CD8-positive, alpha-beta memory T cell (primary cell): ENCODE measurements at regions of chr6 and their contacts with region 1.

Region 1: DNA sequence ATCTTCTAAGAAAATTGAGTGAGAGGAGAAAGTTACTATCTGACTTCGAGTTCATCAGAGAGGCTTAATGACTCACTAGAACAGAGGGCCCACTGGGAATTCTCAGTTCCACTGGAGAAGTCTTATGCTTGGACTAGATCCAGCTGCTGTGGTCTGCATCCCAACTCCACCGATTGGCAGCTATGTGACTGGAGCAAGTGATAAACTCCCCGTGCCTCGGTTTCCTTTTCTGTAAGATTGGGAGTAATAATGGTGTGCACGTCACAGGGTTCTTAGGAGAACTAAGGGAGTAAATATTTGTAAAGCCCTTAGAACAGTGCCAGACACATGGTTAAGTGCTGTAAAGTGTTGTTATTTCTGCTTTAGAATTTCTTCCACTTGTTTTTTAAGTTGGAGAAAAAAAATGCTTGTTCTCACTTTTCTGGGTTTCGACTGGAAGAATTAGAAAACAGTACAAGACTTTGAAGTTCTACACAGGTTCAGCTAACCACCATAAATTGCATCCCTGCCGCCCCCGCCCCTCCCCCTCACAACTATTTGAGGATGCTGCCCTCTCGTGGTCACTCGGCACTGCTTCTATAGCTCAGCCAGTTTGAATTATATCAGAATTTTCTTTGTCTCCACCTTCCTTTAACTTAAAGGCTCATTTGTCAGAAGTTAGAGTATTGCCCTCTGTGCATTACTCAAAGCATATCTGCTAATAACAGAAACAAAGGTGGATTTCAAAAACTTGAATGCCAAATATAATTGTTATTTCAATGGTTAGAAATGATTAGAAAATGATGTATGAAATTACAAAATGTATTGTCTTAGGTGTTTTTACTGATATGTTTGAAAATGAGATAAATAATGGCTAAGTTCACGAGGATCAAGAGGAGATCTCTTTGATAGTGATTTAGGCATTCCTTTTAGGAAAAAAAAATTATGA is 95.0 kb upstream of the IFNGR1 start:
- DNase-seq: peak; percentile 40 to 77 (median 59)
- H3K4me3 ChIP-seq: no peak overlapping the region
- H3K4me3 Mint-ChIP-seq: no peak overlapping the region
- H3K27ac ChIP-seq: no peak overlapping the region
- H3K27ac Mint-ChIP-seq: peak overlapping the region in 2 of 8 donors; percentile 8 to 29
- H3K4me1 ChIP-seq: no peaks in the 10 kb centered on the region
- H3K4me1 Mint-ChIP-seq: peaks cover 2 to 14% (median 9%) of the 10 kb centered on the region in 3 donors
- H3K27me3 ChIP-seq: no peaks in the 10 kb centered on the region
- H3K27me3 Mint-ChIP-seq: peaks cover 0 to 4% of the 10 kb centered on the region in 2 donors

Region 2: GRCh38 chr6:137094411-137095008 is 219.7 kb before region 1 on chr6:
- CTCF ChIA-PET with region 1: interaction called, 31 read pairs
- POLR2A ChIA-PET with region 1: interaction called, 3 read pairs
- DNase-seq: peak; percentile 34 to 65 (median 44)
- H3K4me3 ChIP-seq: no peak overlapping the region
- H3K4me3 Mint-ChIP-seq: peak overlapping the region in 6 of 7 donors; percentile 8 to 55 (median 44)
- H3K27ac ChIP-seq: no peak overlapping the region
- H3K27ac Mint-ChIP-seq: peak overlapping the region in 6 of 8 donors; percentile 26 to 79 (median 63)
- H3K4me1 ChIP-seq: peaks cover 4% of the 10 kb centered on the region
- H3K4me1 Mint-ChIP-seq: peaks cover 19 to 24% (median 21%) of the 10 kb centered on the region in 3 donors
- H3K27me3 ChIP-seq: no peaks in the 10 kb centered on the region
- H3K27me3 Mint-ChIP-seq: peaks cover 2 to 16% of the 10 kb centered on the region in 2 donors

Region 3: DNA sequence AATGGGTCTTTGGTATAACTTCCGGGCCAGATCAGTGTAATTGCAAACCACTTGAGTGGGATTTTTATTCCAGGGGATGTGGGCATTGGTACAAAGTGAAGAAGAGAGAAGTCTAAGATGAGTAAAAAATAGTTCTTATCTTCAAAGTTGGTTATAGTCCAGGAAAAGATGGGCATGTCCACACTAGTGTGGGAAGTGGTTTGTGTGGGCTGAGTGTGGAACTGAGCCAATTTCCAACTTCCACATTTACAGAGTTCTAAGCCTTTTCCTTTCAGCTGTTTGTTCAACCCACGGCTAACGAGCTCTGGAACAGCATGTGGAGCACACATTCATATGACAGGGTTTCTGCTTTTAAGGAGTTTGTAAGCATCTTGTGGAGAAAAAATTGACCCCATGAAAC is 22.8 kb before region 1 on chr6:
- CTCF ChIA-PET with region 1: interaction called, 13 read pairs
- POLR2A ChIA-PET with region 1: no interaction called
- DNase-seq: no peak
- H3K4me3 ChIP-seq: no peak overlapping the region
- H3K4me3 Mint-ChIP-seq: no peak overlapping the region
- H3K27ac ChIP-seq: no peak overlapping the region
- H3K27ac Mint-ChIP-seq: no peak overlapping the region
- H3K4me1 ChIP-seq: no peaks in the 10 kb centered on the region
- H3K4me1 Mint-ChIP-seq: peaks cover 7 to 10% (median 8%) of the 10 kb centered on the region in 3 donors
- H3K27me3 ChIP-seq: peaks cover 3% of the 10 kb centered on the region
- H3K27me3 Mint-ChIP-seq: peaks cover 0 to 1% of the 10 kb centered on the region in 2 donors

Region 4: GRCh38 chr6:137349856-137350830 is 36.0 kb after region 1 on chr6:
- CTCF ChIA-PET with region 1: no interaction called
- POLR2A ChIA-PET with region 1: no interaction called
- DNase-seq: no peak
- H3K4me3 ChIP-seq: no peak overlapping the region
- H3K4me3 Mint-ChIP-seq: no peak overlapping the region
- H3K27ac ChIP-seq: no peak overlapping the region
- H3K27ac Mint-ChIP-seq: no peak overlapping the region
- H3K4me1 ChIP-seq: peaks cover 15% of the 10 kb centered on the region
- H3K4me1 Mint-ChIP-seq: peaks cover 18 to 25% (median 22%) of the 10 kb centered on the region in 3 donors
- H3K27me3 ChIP-seq: no peaks in the 10 kb centered on the region
- H3K27me3 Mint-ChIP-seq: peaks cover 0 to 1% of the 10 kb centered on the region in 2 donors